PC-3 (cell line): ENCODE measurements at regions of chrX and their contacts with region 1.

Region 1: GRCh38 chrX:80808160-80808735 is 1.4 kb downstream of the BRWD3 start:
- DNase-seq: peak; percentile 80
- ATAC-seq: peak; percentile 51
- H3K4me3 ChIP-seq: peak overlapping the region; percentile 97
- H3K27ac ChIP-seq: no peak overlapping the region
- H3K4me1 ChIP-seq: peaks cover 13% of the 10 kb centered on the region
- H3K27me3 ChIP-seq: no peaks in the 10 kb centered on the region
- CTCF ChIP-seq: no peak

Region 2: GRCh38 chrX:80721185-80721584 is 87.1 kb before region 1 on chrX:
- CTCF ChIA-PET with region 1: no interaction called
- POLR2A ChIA-PET with region 1: no interaction called
- intact Hi-C with region 1: loop called (anchors 5 kb)
- DNase-seq: no peak
- ATAC-seq: no peak
- H3K4me3 ChIP-seq: no peak overlapping the region
- H3K27ac ChIP-seq: no peak overlapping the region
- H3K4me1 ChIP-seq: no peaks in the 10 kb centered on the region
- H3K27me3 ChIP-seq: no peaks in the 10 kb centered on the region
- CTCF ChIP-seq: no peak